Endothelial cell of umbilical vein (primary cell): ENCODE measurements at regions of chr10 and their contacts with region 1.

Region 1: GRCh38 chr10:114550756-114551635 is 107.1 kb downstream of the ABLIM1 start:
- DNase-seq: peak; percentile 93
- H3K4me3 ChIP-seq: no peak overlapping the region
- H3K27ac ChIP-seq: no peak overlapping the region
- H3K4me1 ChIP-seq: peaks cover 11% of the 10 kb centered on the region
- H3K27me3 ChIP-seq: no peaks in the 10 kb centered on the region
- CTCF ChIP-seq: peak in 1 of 2 donors; percentile 15
- POLR2A ChIP-seq: no peak

Region 2: DNA sequence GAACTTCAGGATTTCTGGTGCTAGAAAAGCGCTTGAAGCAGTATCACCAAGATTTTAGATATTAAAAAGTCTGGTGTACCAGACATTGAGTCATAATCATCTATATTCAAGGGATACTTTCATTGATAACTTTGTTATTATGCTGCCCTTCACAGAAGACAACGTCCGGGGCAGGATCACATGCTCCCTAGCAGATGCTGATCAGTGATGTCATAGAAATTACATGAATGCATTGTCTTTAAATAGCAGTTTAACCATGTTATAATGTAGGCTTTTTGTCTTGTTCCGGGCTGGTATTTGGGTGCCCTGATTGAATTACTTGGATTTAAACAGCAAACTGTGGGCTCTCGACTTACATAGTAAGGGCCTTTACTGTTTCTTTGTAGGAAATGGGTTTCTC is 257.9 kb before region 1 on chr10:
- CTCF ChIA-PET with region 1: no interaction called
- POLR2A ChIA-PET with region 1: no interaction called
- dilution Hi-C with region 1: no loop called
- intact Hi-C with region 1: no loop called
- DNase-seq: no peak
- H3K4me3 ChIP-seq: no peak overlapping the region
- H3K27ac ChIP-seq: no peak overlapping the region
- H3K4me1 ChIP-seq: no peaks in the 10 kb centered on the region
- H3K27me3 ChIP-seq: no peaks in the 10 kb centered on the region
- CTCF ChIP-seq: no peak
- POLR2A ChIP-seq: no peak

Region 3: DNA sequence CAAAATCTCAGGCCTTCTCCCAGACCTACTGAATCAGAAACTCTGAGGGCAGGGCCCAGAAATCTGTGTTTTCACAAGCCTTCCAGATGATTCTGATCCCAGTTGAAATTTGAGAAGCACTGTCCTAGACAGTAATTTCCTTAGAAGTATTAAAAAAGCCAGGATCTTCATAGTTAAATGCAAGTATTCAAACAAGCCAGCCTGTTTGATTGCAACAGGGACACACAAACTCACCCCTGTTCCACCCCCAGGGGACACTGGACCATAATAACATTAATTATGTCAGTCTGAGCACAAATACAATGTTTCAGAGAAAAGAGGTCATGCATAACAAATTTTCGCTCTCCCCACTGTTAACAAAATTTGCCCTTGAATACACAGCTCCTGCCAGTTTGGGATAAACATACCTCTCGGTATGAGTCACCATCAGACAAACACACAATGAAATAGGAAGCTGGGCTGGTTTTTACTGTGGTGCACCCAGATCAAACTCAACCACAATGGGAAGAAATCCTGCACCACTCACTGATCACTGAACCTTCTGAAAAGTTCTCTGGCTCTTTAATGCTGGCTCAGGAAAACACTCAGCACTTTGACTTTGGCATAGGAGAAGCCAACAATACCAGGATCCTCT is 72.8 kb after region 1 on chr10:
- CTCF ChIA-PET with region 1: no interaction called
- POLR2A ChIA-PET with region 1: no interaction called
- dilution Hi-C with region 1: no loop called
- intact Hi-C with region 1: loop called (anchors 2 kb)
- DNase-seq: peak; percentile 90
- H3K4me3 ChIP-seq: no peak overlapping the region
- H3K27ac ChIP-seq: peak overlapping the region; percentile 45
- H3K4me1 ChIP-seq: peaks cover 15% of the 10 kb centered on the region
- H3K27me3 ChIP-seq: no peaks in the 10 kb centered on the region
- CTCF ChIP-seq: no peak
- POLR2A ChIP-seq: no peak

Region 4: DNA sequence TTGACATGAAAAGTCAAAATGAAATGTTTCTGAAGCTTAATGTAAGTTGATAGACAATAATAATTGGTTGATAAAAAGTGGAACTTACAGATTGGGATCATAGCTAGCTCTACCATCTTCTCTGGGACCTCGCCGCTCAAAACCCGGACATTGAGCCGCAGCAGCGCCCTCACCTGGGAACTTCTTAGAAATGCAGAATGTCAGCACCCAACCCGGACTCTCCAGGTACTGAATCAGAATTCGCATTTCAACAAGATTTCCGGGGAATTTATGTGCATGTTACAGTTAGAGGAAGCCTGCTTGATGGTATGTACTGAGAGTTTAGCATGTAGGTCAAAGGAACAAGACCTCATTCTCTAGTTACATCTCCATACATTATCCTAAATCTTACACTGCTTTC is 143.8 kb after region 1 on chr10:
- CTCF ChIA-PET with region 1: interaction called, 113 read pairs
- POLR2A ChIA-PET with region 1: no interaction called
- dilution Hi-C with region 1: loop called (anchors 25 kb)
- intact Hi-C with region 1: loop called (anchors 1 kb)
- DNase-seq: peak; percentile 62
- H3K4me3 ChIP-seq: no peak overlapping the region
- H3K27ac ChIP-seq: no peak overlapping the region
- H3K4me1 ChIP-seq: peaks cover 15% of the 10 kb centered on the region
- H3K27me3 ChIP-seq: no peaks in the 10 kb centered on the region
- CTCF ChIP-seq: peak; percentile 54 to 70
- POLR2A ChIP-seq: no peak

Region 5: GRCh38 chr10:114779803-114780609 is 229.0 kb after region 1 on chr10:
- CTCF ChIA-PET with region 1: interaction called, 50 read pairs
- POLR2A ChIA-PET with region 1: no interaction called
- dilution Hi-C with region 1: loop called (anchors 25 kb)
- intact Hi-C with region 1: no loop called
- DNase-seq: peak; percentile 97
- H3K4me3 ChIP-seq: no peak overlapping the region
- H3K27ac ChIP-seq: peak overlapping the region; percentile 91
- H3K4me1 ChIP-seq: peaks cover 21% of the 10 kb centered on the region
- H3K27me3 ChIP-seq: no peaks in the 10 kb centered on the region
- CTCF ChIP-seq: no peak
- POLR2A ChIP-seq: no peak

Region 6: GRCh38 chr10:115129752-115130151 is 578.8 kb after region 1 on chr10:
- CTCF ChIA-PET with region 1: interaction called, 6 read pairs
- POLR2A ChIA-PET with region 1: no interaction called
- dilution Hi-C with region 1: no loop called
- intact Hi-C with region 1: loop called (anchors 1 kb)
- DNase-seq: peak; percentile 46
- H3K4me3 ChIP-seq: no peak overlapping the region
- H3K27ac ChIP-seq: no peak overlapping the region
- H3K4me1 ChIP-seq: no peaks in the 10 kb centered on the region
- H3K27me3 ChIP-seq: no peaks in the 10 kb centered on the region
- CTCF ChIP-seq: no peak
- POLR2A ChIP-seq: no peak